ENCODE measurements at regions of chr9 and their contacts with region 1.

Region 1: DNA sequence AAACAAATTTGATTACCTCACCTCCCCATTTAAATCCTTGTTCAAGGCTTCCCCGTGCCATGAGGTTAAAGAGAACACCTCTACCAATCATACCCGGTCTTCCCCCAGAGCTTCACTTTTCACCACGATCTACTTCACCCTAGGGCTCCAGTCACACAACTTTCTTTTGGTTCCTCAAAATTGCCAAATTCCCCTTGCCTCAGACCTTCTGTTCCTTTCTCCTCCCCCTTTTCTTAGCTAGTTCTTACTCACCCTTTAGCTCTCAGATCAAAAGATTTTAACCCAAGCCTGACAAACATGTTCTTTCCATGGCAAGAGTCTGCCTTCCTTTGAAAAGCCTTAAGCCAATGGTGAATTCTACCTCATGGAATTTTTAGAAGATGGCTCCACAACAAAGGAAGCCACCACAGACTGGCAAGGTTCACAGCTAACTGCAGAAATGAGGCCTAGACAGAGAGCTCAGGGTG is 56.7 kb downstream of the MAPKAP1 start:
- DNase-seq: no peak
- ATAC-seq: peak in 3 of 4 donors; percentile 47 to 60 (median 47)
- H3K4me3 ChIP-seq: peak overlapping the region in 1 of 12 donors; percentile 23
- H3K27ac ChIP-seq: peak overlapping the region in 3 of 12 donors; percentile 6 to 85 (median 11)
- H3K4me1 ChIP-seq: peaks cover 0 to 85% (median 22%) of the 10 kb centered on the region in 12 donors
- H3K27me3 ChIP-seq: no peaks in the 10 kb centered on the region
- CTCF ChIP-seq: no peak
- POLR2A ChIP-seq: no peak

Region 2: DNA sequence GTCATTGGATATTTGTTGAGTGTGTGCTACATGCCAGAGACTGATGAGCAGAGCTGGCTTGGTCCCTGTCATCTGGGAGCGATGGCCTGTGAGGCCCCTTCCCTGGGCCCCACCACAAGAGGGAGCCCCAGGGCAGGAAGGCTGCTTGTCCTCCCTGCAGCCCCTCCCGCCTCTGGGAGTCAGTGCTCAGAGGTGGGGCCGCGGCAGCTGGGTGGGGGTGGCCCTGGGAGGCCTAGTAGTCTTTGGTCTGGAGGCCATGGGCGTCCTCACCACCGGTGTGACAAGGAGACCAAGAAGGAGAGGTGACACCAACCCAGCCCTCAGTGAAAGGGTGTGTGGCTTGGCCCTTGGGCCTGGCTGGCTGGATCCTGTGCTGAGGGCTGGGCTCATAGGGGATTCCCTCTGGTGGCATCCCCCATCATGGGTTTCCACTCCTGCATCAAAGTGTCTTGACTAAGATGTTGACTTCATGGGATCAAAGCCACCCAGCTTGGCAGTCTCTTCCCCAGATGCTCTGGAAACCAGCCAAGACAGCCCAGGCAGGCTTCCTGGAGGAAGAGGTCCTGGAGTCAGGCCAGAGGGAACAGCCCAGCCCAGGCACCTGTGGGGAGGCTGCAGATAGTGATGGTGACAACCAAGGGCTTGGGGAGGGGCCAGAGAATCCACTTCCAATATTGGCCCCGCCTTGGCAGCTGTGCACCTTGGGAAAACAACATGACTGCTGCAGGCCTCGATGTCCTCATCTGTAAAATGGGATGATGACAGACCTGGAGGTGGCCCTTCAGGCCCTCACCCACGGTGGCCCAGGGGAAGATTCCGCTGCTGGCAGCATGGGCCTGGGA is 222.0 kb before region 1 on chr9:
- intact Hi-C with region 1: no loop called
- DNase-seq: peak in 2 of 5 donors; percentile 33 to 50
- ATAC-seq: peak in 3 of 4 donors; percentile 40 to 74 (median 64)
- H3K4me3 ChIP-seq: no peak overlapping the region
- H3K27ac ChIP-seq: no peak overlapping the region
- H3K4me1 ChIP-seq: no peaks in the 10 kb centered on the region
- H3K27me3 ChIP-seq: no peaks in the 10 kb centered on the region
- CTCF ChIP-seq: peak; percentile 28 to 57 (median 40)
- POLR2A ChIP-seq: no peak

Region 3: DNA sequence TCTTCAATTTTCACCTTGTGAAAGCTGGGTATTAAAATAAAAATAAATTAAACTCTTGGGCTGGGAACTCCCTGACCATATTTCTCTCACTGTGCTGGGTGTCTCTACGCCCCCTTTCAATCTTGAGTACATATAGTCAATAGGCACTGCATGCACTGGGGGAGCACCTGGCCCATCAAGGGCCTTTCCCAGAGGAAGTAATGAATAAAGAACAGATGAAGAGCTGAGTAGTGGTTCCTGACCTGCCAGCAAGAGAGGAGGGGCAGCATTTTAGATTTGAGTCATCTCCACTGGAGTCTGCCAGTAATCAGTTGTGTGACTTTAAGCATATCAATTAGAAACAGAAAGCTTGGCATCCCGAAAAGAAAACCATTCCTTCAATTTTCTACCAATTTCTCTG is 50.5 kb after region 1 on chr9:
- intact Hi-C with region 1: loop called in 1 of 10 experiments (anchors 5 kb)
- DNase-seq: no peak
- ATAC-seq: no peak
- H3K4me3 ChIP-seq: no peak overlapping the region
- H3K27ac ChIP-seq: no peak overlapping the region
- H3K4me1 ChIP-seq: peaks cover 0 to 31% (median 9%) of the 10 kb centered on the region in 12 donors
- H3K27me3 ChIP-seq: no peaks in the 10 kb centered on the region
- CTCF ChIP-seq: no peak
- POLR2A ChIP-seq: no peak